Left ventricle myocardium inferior (tissue), 1 donor: ENCODE measurements at regions of chr5 and their contacts with region 1.

Region 1: GRCh38 chr5:161988077-161988476 is 79.5 kb upstream of the GABRG2 start:
- DNase-seq: no peak
- H3K4me3 ChIP-seq: no peak overlapping the region
- H3K27ac ChIP-seq: no peak overlapping the region
- H3K4me1 ChIP-seq: no peaks in the 10 kb centered on the region
- H3K27me3 ChIP-seq: no peaks in the 10 kb centered on the region
- CTCF ChIP-seq: no peak

Region 2: DNA sequence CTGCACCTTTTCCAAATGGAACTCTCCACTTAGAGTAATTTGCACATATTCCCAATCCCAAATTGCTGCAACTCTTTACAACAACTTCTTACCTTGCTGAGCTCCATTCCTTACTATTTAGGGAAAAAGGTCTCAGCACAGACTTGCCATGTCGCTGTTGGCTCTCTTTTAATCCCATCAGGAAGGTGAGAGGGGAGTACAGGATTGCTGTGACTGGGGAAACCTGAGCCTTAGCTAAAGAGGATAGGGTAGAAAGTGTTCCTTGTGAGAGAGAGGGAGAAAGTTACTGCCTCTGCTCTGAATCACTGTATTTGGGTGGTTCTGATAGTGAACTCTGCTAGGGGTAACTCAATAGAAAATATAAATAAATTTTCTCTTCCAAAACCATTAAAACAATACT is 183.8 kb before region 1 on chr5:
- intact Hi-C with region 1: no loop called
- DNase-seq: no peak
- H3K4me3 ChIP-seq: no peak overlapping the region
- H3K27ac ChIP-seq: no peak overlapping the region
- H3K4me1 ChIP-seq: no peaks in the 10 kb centered on the region
- H3K27me3 ChIP-seq: no peaks in the 10 kb centered on the region
- CTCF ChIP-seq: no peak

Region 3: GRCh38 chr5:161966564-161966963 is 21.5 kb before region 1 on chr5:
- intact Hi-C with region 1: loop called (anchors 2 kb)
- DNase-seq: no peak
- H3K4me3 ChIP-seq: no peak overlapping the region
- H3K27ac ChIP-seq: no peak overlapping the region
- H3K4me1 ChIP-seq: no peaks in the 10 kb centered on the region
- H3K27me3 ChIP-seq: no peaks in the 10 kb centered on the region
- CTCF ChIP-seq: peak; percentile 41